ENCODE measurements at regions of chr7 and their contacts with region 1.

Region 1: DNA sequence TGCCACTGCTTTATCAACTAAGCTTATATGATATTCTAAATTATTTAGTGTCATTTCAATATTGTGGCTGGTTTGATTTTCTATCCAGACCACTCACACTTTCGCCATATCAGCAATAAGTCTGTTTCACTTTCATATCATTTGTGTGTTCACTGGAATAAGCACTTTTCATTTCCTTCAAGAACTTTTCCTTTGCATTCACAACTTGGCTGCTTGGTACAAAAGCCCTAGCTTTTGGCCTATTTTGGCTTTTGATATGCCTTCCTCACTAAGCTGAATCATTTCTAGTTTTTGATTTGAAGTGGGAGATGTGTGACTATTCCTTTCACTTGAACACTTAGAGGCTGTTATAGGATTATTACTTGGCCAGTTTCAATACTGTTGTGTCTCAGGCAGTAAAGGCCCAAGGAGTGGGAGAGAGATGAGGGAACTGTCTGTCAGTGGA is 120.9 kb upstream of the NAMPT start:
- DNase-seq: peak; percentile 48
- H3K4me3 Mint-ChIP-seq: peak overlapping the region; percentile 1
- H3K27ac Mint-ChIP-seq: peak overlapping the region; percentile 19
- H3K4me1 Mint-ChIP-seq: peaks cover 31% of the 10 kb centered on the region
- H3K27me3 Mint-ChIP-seq: peaks cover 10% of the 10 kb centered on the region

Region 2: DNA sequence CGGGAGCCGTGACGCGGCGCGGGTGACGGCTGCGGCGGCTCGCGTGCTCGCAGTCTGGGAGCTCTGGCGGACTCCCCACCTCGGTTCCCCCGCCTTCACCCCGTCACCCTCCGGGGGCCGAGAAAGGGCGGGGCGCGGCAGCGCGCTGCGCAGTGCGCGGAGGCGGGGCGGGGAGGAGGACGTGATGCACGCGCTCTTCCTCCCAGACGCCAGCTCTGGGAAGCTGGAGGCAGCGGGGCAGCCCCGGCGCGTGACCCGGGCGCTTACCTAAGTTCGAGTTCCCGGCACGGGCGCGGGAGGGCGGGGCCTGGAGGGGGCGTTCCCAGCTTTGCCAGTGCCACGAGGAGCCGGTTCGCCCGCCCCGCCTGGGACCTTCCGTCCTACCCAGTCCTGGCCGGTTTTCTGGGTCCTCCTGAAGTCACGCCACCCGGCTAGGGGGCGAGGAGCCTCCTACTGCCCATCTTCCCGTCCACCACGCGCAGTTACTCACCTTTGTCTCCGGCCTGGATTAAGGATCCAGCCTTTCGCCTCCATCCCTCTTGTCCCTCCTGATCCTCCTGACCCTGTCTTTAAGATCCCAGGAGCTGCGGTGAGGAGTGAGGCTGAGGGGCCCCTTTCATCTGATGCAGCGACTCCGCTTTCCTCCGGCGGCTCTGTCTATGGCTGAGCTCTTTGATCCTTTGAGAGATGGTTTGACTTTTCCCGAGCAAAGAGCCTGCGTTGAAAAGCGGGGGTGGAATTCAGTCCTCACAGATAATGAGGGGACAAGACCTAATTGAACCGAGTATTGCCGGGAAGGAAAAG is 120.5 kb before region 1 on chr7:
- CTCF ChIA-PET with region 1: no interaction called
- POLR2A ChIA-PET with region 1: interaction called, 20 read pairs
- intact Hi-C with region 1: loop called (anchors 1 kb)
- DNase-seq: peak; percentile 100
- H3K4me3 Mint-ChIP-seq: peak overlapping the region; percentile 92
- H3K27ac Mint-ChIP-seq: peak overlapping the region; percentile 99
- H3K4me1 Mint-ChIP-seq: peaks cover 50% of the 10 kb centered on the region
- H3K27me3 Mint-ChIP-seq: peaks cover 2% of the 10 kb centered on the region

Region 3: GRCh38 chr7:106419455-106420182 is 13.9 kb after region 1 on chr7:
- CTCF ChIA-PET with region 1: interaction called, 3 read pairs
- POLR2A ChIA-PET with region 1: interaction called, 11 read pairs
- intact Hi-C with region 1: loop called (anchors 1 kb)
- DNase-seq: peak; percentile 75
- H3K4me3 Mint-ChIP-seq: no peak overlapping the region
- H3K27ac Mint-ChIP-seq: peak overlapping the region; percentile 76
- H3K4me1 Mint-ChIP-seq: peaks cover 76% of the 10 kb centered on the region
- H3K27me3 Mint-ChIP-seq: peaks cover 1% of the 10 kb centered on the region

Region 4: DNA sequence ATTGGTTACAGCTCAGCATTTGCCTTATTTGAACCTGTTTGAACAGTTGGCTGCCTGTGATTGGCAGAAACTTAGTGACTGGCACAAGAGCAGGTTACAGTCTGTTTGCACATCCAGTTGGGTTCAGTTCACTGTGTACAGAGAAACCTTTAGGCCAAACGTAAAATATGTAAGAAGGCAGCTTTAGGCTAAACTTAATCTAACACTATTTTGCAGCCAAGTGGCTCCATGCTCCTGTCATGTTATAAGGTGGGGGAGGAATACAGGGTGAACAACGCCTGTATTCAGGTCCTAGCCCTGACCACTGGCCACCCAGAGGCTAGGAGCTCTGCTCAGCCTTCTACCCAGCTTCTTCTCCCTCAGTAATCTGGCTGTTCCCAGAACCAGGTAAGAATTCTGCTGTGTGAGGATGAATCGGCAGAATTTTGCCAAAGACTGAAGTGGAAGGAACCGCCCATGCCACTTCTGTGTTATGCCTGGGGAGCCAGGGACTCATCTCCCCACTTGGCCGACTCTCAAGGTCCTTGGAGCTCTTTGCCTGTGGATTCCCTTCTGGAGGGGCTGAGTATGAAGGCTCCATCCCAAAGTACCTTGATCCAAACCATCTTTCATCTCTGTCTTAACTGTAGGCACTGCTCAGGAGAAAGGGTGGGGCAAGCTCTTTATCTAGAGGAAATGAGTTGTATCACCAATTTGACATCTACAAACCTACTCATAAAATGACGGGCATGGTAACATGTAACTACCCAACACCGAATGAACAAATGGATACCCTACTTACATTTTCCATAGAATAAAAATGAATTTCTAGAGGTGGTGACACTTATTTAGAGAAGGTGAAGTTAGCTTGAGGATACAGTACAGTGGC is 43.5 kb after region 1 on chr7:
- CTCF ChIA-PET with region 1: no interaction called
- POLR2A ChIA-PET with region 1: no interaction called
- intact Hi-C with region 1: loop called (anchors 5 kb)
- DNase-seq: no peak
- H3K4me3 Mint-ChIP-seq: no peak overlapping the region
- H3K27ac Mint-ChIP-seq: no peak overlapping the region
- H3K4me1 Mint-ChIP-seq: peaks cover 9% of the 10 kb centered on the region
- H3K27me3 Mint-ChIP-seq: peaks cover 8% of the 10 kb centered on the region